Heart left ventricle (tissue), 16 donors: ENCODE measurements at regions of chr9 and their contacts with region 1.

Region 1: DNA sequence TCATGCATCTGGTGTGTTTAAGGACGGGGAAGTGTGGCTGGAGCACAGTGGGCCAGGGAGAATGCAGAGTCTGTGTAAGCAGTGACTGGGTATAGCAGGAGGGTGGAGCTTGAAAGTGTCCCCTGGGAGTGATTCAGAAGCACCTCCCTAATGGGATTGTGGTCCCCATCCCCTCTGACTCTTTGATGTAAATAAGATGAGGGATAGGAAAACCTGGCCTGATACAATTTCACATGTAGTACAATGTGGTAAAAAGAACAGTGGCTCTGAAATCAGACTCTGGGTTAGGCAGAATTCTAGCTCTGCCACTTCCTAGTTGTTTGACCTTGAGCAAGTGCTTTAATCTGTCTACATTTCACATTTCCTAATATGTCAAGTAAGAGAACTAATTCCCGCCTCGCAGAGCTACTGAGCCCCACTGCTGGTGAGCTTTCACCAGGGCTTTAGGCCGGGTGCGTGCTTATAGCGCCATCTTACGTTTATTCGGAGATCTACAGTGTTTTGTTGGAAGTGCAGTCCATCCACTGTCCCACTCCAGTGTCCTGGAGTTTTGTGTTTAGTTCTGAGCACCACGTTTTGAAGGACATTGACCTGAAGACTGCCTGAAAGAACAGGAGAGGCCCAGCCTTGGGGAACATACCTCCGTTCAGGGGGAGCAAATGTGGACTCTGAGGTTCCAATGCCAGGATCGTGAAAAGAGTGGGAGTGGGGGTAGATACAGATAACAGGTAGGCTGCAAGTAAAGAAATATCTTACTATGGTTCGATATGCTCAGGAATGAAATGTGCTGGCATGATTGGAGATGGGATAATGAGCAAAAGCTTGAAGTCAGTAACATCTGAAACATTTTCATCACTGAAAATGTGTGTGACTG is 51.2 kb upstream of the TESK1 start:
- DNase-seq: peak in 4 of 5 donors; percentile 74 to 75 (median 74)
- ATAC-seq: peak; percentile 74 to 86 (median 85)
- H3K4me3 ChIP-seq: no peak overlapping the region
- H3K27ac ChIP-seq: peak overlapping the region in 10 of 12 donors; percentile 2 to 77 (median 56)
- H3K4me1 ChIP-seq: peaks cover 0 to 44% (median 21%) of the 10 kb centered on the region in 12 donors
- H3K27me3 ChIP-seq: no peaks in the 10 kb centered on the region
- CTCF ChIP-seq: peak; percentile 79 to 96 (median 93)
- POLR2A ChIP-seq: no peak

Region 2: GRCh38 chr9:35116898-35117551 is 436.9 kb before region 1 on chr9:
- intact Hi-C with region 1: loop called in 5 of 10 experiments (anchors 5 to 10 kb)
- DNase-seq: peak; percentile 92 to 95 (median 93)
- ATAC-seq: peak; percentile 74 to 81 (median 76)
- H3K4me3 ChIP-seq: peak overlapping the region in 11 of 12 donors; percentile 49 to 81 (median 65)
- H3K27ac ChIP-seq: peak overlapping the region in 11 of 12 donors; percentile 26 to 98 (median 88)
- H3K4me1 ChIP-seq: peaks cover 0 to 46% (median 34%) of the 10 kb centered on the region in 12 donors
- H3K27me3 ChIP-seq: no peaks in the 10 kb centered on the region
- CTCF ChIP-seq: peak; percentile 93 to 98 (median 95)
- POLR2A ChIP-seq: no peak

Region 3: GRCh38 chr9:35306283-35306682 is 247.6 kb before region 1 on chr9:
- intact Hi-C with region 1: loop called in 1 of 10 experiments (anchors 10 kb)
- DNase-seq: no peak
- ATAC-seq: no peak
- H3K4me3 ChIP-seq: no peak overlapping the region
- H3K27ac ChIP-seq: no peak overlapping the region
- H3K4me1 ChIP-seq: peaks cover 0 to 5% (median under 1%) of the 10 kb centered on the region in 12 donors
- H3K27me3 ChIP-seq: no peaks in the 10 kb centered on the region
- CTCF ChIP-seq: no peak
- POLR2A ChIP-seq: no peak

Region 4: GRCh38 chr9:35385042-35385441 is 168.9 kb before region 1 on chr9:
- intact Hi-C with region 1: loop called in 1 of 10 experiments (anchors 10 kb)
- DNase-seq: no peak
- ATAC-seq: peak in 3 of 4 donors; percentile 14 to 45 (median 42)
- H3K4me3 ChIP-seq: no peak overlapping the region
- H3K27ac ChIP-seq: no peak overlapping the region
- H3K4me1 ChIP-seq: peaks cover 0 to 6% (median 0%) of the 10 kb centered on the region in 12 donors
- H3K27me3 ChIP-seq: no peaks in the 10 kb centered on the region
- CTCF ChIP-seq: peak in 7 of 12 donors; percentile 7 to 42 (median 30)
- POLR2A ChIP-seq: no peak

Region 5: GRCh38 chr9:35464141-35465025 is 89.5 kb before region 1 on chr9:
- intact Hi-C with region 1: no loop called
- DNase-seq: no peak
- ATAC-seq: no peak
- H3K4me3 ChIP-seq: no peak overlapping the region
- H3K27ac ChIP-seq: no peak overlapping the region
- H3K4me1 ChIP-seq: no peaks in the 10 kb centered on the region
- H3K27me3 ChIP-seq: no peaks in the 10 kb centered on the region
- CTCF ChIP-seq: no peak
- POLR2A ChIP-seq: no peak

Region 6: DNA sequence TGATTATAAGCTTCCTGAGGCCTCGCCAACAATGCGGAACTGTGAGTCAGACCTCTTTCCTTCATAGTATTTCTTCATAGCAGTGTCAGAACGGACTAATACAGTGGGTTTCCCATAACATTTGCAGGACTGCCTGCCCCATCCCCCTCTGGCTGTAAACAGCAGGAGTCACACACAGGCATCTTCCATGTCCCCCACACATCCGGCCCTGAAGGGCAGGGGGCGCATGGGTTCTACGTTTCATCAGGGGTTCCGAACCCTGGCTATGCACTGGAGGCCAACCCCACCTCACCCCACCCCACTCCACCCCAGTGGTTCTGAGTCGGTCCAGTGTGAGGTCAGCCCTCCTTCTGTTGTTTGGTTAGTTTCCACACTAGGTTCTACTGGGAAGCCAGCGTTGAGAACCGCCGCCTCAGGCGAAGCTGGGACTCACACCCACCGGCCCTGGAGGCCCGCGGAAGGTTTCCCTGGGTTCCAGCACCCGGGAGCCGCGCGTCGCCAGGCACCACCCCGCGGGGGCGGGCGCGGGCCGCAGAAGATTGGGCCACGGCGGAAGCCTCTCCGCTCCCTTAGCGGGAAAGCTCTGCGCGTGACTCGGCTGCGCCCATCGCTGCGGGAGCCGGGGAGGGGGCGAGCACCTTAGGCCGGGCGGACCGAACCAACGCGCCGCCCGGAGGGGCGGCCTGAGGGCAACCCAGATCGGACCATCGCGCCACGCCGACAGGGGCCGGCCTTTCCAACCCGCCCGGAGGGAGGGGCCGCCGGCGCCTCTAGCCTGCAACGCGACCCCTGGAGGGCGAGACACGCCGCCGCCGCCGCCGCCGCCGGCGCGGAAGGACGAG is 64.4 kb before region 1 on chr9 and contains the start of gene RUSC2:
- intact Hi-C with region 1: loop called in 8 of 10 experiments (anchors 1 to 5 kb)
- DNase-seq: peak; percentile 87 to 92 (median 91)
- ATAC-seq: peak; percentile 78 to 90 (median 87)
- H3K4me3 ChIP-seq: peak within 1 kb of the TSS; percentile 53 to 97 (median 86)
- H3K27ac ChIP-seq: peak within 1 kb of the TSS; percentile 87 to 98 (median 96)
- H3K4me1 ChIP-seq: peaks cover 5 to 40% (median 31%) of the 10 kb centered on the region in 12 donors
- H3K27me3 ChIP-seq: no peaks in the 10 kb centered on the region
- CTCF ChIP-seq: peak; percentile 17 to 64 (median 46)
- POLR2A ChIP-seq: peak in 1 of 2 donors; percentile 79
- total RNA-seq, gene RUSC2: 23.0 to 56.1 (median 30.5) TPM